Caco-2 (cell line): ENCODE measurements at regions of chr5 and their contacts with region 1.

Region 1: GRCh38 chr5:151447174-151448037 is at the start of gene SLC36A1:
- DNase-seq: peak; percentile 94
- H3K4me3 ChIP-seq: peak within 1 kb of the TSS; percentile 81
- H3K4me3 Mint-ChIP-seq: peak within 1 kb of the TSS; percentile 94
- H3K27ac Mint-ChIP-seq: peak within 1 kb of the TSS; percentile 88
- H3K4me1 ChIP-seq: peaks cover 8% of the 10 kb centered on the region; the same call in 1 of the 2 replicates
- H3K4me1 Mint-ChIP-seq: peaks cover 27% of the 10 kb centered on the region
- H3K27me3 ChIP-seq: no peaks in the 10 kb centered on the region
- H3K27me3 Mint-ChIP-seq: no peaks in the 10 kb centered on the region
- CTCF ChIP-seq: peak; percentile 87 to 93
- total RNA-seq, gene SLC36A1: 17.5 and 18.2 TPM in 2 replicates

Region 2: GRCh38 chr5:151384106-151384505 is 63.3 kb before region 1 on chr5:
- CTCF ChIA-PET with region 1: interaction called, 5 read pairs
- POLR2A ChIA-PET with region 1: no interaction called
- intact Hi-C with region 1: loop called (anchors 5 kb)
- DNase-seq: no peak
- H3K4me3 ChIP-seq: no peak overlapping the region
- H3K4me3 Mint-ChIP-seq: no peak overlapping the region
- H3K27ac Mint-ChIP-seq: no peak overlapping the region
- H3K4me1 ChIP-seq: no peaks in the 10 kb centered on the region
- H3K4me1 Mint-ChIP-seq: peaks cover 11% of the 10 kb centered on the region
- H3K27me3 ChIP-seq: no peaks in the 10 kb centered on the region
- H3K27me3 Mint-ChIP-seq: no peaks in the 10 kb centered on the region
- CTCF ChIP-seq: no peak

Region 3: GRCh38 chr5:151463137-151464029 is 16.0 kb after region 1 on chr5:
- CTCF ChIA-PET with region 1: interaction called, 24 read pairs
- POLR2A ChIA-PET with region 1: no interaction called
- intact Hi-C with region 1: loop called (anchors 1 kb)
- DNase-seq: peak; percentile 46 to 57
- H3K4me3 ChIP-seq: no peak overlapping the region
- H3K4me3 Mint-ChIP-seq: no peak overlapping the region
- H3K27ac Mint-ChIP-seq: no peak overlapping the region
- H3K4me1 ChIP-seq: peaks cover 12% of the 10 kb centered on the region
- H3K4me1 Mint-ChIP-seq: peaks cover 8% of the 10 kb centered on the region
- H3K27me3 ChIP-seq: no peaks in the 10 kb centered on the region
- H3K27me3 Mint-ChIP-seq: no peaks in the 10 kb centered on the region
- CTCF ChIP-seq: peak; percentile 72 to 83

Region 4: DNA sequence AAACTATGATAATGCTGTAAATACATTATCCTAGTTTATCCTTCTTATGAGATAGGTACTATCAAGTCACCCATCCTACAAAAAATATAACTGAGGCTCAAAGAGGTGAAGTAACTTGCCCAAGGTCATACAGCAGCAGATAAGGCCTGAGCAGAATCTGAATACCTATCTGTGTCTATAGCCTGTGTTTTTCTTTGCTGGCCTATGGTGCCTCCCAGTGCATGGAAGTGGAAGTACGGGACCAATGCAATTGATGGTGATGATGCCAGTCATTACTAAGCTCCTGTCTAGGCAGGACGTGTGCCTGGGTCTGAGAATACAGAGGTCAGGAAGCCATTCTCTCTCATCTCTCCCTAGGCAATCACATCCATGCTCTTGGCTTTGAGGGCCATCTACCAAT is 75.9 kb after region 1 on chr5:
- CTCF ChIA-PET with region 1: interaction called, 17 read pairs
- POLR2A ChIA-PET with region 1: no interaction called
- intact Hi-C with region 1: loop called (anchors 1 kb)
- DNase-seq: peak; percentile 55 to 59
- H3K4me3 ChIP-seq: no peak overlapping the region
- H3K4me3 Mint-ChIP-seq: no peak overlapping the region
- H3K27ac Mint-ChIP-seq: no peak overlapping the region
- H3K4me1 ChIP-seq: no peaks in the 10 kb centered on the region
- H3K4me1 Mint-ChIP-seq: no peaks in the 10 kb centered on the region
- H3K27me3 ChIP-seq: no peaks in the 10 kb centered on the region
- H3K27me3 Mint-ChIP-seq: no peaks in the 10 kb centered on the region
- CTCF ChIP-seq: peak; percentile 67 to 71

Region 5: GRCh38 chr5:151534350-151534749 is 86.9 kb after region 1 on chr5:
- CTCF ChIA-PET with region 1: no interaction called
- POLR2A ChIA-PET with region 1: no interaction called
- intact Hi-C with region 1: no loop called
- DNase-seq: no peak
- H3K4me3 ChIP-seq: no peak overlapping the region
- H3K4me3 Mint-ChIP-seq: no peak overlapping the region
- H3K27ac Mint-ChIP-seq: no peak overlapping the region
- H3K4me1 ChIP-seq: no peaks in the 10 kb centered on the region
- H3K4me1 Mint-ChIP-seq: no peaks in the 10 kb centered on the region
- H3K27me3 ChIP-seq: no peaks in the 10 kb centered on the region
- H3K27me3 Mint-ChIP-seq: peaks cover 14% of the 10 kb centered on the region
- CTCF ChIP-seq: no peak

Region 6: DNA sequence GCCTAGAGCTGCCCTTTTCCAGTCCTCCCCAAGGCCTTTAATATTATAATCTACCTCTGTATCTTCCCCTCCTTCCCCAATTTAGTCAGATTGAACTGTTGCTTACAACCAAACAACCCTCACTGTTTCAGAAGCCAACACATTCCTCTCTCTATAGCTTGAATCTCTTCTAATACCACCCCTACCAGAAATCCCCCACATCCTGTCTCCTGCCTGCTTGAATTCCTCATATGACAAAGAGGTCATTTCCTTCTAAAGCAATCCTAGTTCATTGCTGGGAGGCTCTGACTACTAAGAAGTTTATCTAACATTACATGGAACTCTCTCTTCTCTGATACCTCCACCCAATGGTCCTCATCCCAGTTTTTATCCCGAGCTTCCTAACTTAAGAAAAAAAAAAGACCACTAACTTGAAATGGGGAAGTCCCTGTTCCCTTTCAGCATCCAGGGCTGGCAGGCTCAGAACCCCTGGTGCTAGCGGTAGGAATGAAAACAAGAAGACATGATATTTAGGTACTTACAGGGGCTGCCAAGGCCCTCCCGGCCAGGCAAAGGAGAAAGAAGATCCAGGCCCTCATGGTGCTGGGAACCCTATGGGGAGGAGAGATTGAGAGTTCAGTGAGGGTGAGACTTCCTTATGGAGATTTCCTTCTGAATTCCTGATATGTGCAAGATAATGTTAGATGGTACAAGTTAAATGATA is 228.4 kb after region 1 on chr5:
- CTCF ChIA-PET with region 1: no interaction called
- POLR2A ChIA-PET with region 1: no interaction called
- intact Hi-C with region 1: no loop called
- DNase-seq: no peak
- H3K4me3 ChIP-seq: no peak overlapping the region
- H3K4me3 Mint-ChIP-seq: no peak overlapping the region
- H3K27ac Mint-ChIP-seq: no peak overlapping the region
- H3K4me1 ChIP-seq: peaks cover 32% of the 10 kb centered on the region
- H3K4me1 Mint-ChIP-seq: peaks cover 20% of the 10 kb centered on the region
- H3K27me3 ChIP-seq: no peaks in the 10 kb centered on the region
- H3K27me3 Mint-ChIP-seq: no peaks in the 10 kb centered on the region
- CTCF ChIP-seq: no peak

Region 7: DNA sequence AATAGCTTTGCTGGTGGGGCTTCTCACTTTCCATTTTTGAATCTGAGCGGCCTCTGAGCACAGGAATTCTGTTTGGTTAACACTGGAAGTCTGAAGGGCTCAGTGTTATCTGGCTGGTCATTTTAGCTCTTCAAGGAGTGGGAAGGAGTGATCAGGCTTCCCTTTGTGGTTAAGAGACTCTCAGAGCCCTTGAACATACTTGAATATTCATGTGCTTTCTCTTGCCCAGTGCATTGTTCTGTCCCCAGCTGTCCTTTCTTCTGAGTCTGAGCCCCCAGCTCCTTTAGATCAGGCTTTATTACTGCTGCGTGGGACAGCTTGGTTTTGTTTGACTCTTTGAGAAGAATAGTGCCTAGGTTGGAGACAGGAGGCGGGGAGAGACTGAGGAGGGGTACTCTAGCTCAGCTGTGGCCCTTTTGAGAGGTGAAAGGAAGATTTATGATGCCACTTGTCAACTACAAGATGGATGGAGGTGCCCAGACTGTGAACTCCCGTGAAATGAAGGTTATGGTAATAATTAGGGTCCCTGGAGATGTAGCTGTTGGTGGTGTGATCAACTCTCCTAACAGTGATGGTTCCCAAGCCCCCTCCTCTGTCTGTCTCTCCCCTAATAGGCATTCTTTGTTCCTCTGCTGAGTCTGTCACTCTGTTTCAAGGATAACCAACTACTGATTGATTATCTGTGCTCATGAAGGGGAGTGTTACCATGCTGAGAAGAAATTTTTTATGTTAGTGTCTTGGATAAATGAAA is 560.4 kb after region 1 on chr5:
- CTCF ChIA-PET with region 1: no interaction called
- POLR2A ChIA-PET with region 1: no interaction called
- intact Hi-C with region 1: no loop called
- DNase-seq: no peak
- H3K4me3 ChIP-seq: no peak overlapping the region
- H3K4me3 Mint-ChIP-seq: no peak overlapping the region
- H3K27ac Mint-ChIP-seq: no peak overlapping the region
- H3K4me1 ChIP-seq: no peaks in the 10 kb centered on the region
- H3K4me1 Mint-ChIP-seq: no peaks in the 10 kb centered on the region
- H3K27me3 ChIP-seq: no peaks in the 10 kb centered on the region
- H3K27me3 Mint-ChIP-seq: peaks cover 8% of the 10 kb centered on the region
- CTCF ChIP-seq: no peak